A549 (cell line): ENCODE measurements at regions of chr16 and their contacts with region 1.

Region 1: DNA sequence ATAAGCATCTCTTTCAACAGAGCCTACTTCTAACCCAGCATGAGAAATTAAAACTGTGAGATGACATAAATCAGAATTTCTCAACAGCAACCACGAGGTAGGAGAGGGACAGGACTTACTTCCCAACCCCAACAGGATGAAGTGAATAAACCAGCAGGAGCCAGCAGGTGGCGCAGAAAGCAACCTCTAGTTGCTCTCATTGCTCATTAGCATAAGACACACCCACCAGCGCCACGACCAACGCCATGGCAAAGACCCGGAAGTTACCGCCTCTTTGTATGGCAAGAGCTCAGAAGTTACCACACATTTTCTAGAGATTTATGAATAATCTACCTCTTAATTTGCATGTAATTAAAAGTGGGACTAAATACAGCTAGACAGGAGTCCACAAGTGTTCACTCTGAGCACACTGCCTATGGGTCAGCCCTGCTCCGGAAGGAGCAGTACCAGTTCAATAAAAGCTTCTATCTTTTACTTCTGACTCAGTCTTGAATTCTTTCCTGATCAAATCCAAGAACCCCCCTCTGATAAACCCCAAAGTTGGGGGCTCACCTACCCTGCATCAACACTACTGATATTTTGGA is 189.6 kb upstream of the CDH8 start:
- DNase-seq: peak; percentile 3 to 89
- ATAC-seq: peak; percentile 94 to 100
- H3K4me3 ChIP-seq: peak overlapping the region; percentile 36; the same call in 2 of the 3 replicates
- H3K27ac ChIP-seq: no peak overlapping the region
- H3K4me1 ChIP-seq: no peaks in the 10 kb centered on the region
- CTCF ChIP-seq: peak; percentile 45; the same call in 2 of the 3 replicates
- EP300 ChIP-seq: no peak
- POLR2A ChIP-seq: no peak
- RAD21 ChIP-seq: peak in 1 of 2 experiments; percentile 43; a peak in 2 of 5 replicates

Region 2: GRCh38 chr16:63289852-63290460 is 1064.2 kb after region 1 on chr16:
- CTCF ChIA-PET with region 1: interaction called, 12 read pairs
- POLR2A ChIA-PET with region 1: no interaction called
- DNase-seq: peak; percentile 4 to 48
- ATAC-seq: peak in 1 of 2 experiments; percentile 81; a peak in 3 of 6 replicates
- H3K4me3 ChIP-seq: no peak overlapping the region
- H3K27ac ChIP-seq: no peak overlapping the region
- H3K4me1 ChIP-seq: no peaks in the 10 kb centered on the region
- CTCF ChIP-seq: peak; percentile 40
- EP300 ChIP-seq: no peak
- POLR2A ChIP-seq: no peak
- RAD21 ChIP-seq: peak; percentile 60 to 70